Head of caudate nucleus (tissue), 42 donors: ENCODE measurements at regions of chr13 and their contacts with region 1.

Region 1: DNA sequence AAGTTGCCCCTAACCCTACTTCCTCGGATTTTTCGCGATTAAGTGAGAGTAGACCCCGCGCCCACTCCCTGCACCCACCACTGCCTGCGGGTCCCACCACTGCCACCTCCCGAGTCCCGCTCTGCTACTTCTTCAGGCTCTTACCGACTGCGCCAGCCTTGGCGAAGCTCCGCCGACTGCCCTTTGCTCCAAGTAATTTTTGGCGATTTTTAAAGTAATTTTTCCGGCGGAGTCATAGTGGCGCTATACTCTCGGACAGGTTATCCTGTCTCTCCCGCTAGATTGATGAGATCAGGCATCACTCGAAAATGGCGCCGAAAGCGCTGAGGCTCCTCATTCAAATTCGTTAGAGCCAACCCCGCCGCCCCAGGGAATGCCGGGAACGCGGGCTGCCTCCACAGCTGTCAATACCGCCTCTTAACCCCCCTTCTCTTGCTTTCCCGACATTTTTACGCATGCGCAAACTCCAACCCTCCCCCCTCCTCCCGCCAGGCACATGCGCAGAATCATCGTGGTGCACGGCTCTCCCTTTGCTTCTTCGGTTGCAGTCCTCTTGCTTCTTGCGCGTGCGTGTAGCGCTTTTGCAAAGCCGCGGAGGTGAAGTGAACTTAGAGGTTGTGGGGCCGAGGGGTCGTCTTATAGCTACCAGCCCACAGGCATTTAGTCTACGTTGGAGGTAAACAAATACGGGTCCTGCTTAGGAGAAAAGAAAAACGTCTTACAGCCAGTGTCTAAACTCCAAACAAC is 66.6 kb downstream of the KCNRG start:
- DNase-seq: peak; percentile 97 to 100 (median 99)

Region 2: GRCh38 chr13:49357694-49358093 is 724.2 kb before region 1 on chr13:
- intact Hi-C with region 1: no loop called
- DNase-seq: no peak

Region 3: GRCh38 chr13:49597043-49597641 is 484.7 kb before region 1 on chr13:
- intact Hi-C with region 1: no loop called
- DNase-seq: no peak

Region 4: DNA sequence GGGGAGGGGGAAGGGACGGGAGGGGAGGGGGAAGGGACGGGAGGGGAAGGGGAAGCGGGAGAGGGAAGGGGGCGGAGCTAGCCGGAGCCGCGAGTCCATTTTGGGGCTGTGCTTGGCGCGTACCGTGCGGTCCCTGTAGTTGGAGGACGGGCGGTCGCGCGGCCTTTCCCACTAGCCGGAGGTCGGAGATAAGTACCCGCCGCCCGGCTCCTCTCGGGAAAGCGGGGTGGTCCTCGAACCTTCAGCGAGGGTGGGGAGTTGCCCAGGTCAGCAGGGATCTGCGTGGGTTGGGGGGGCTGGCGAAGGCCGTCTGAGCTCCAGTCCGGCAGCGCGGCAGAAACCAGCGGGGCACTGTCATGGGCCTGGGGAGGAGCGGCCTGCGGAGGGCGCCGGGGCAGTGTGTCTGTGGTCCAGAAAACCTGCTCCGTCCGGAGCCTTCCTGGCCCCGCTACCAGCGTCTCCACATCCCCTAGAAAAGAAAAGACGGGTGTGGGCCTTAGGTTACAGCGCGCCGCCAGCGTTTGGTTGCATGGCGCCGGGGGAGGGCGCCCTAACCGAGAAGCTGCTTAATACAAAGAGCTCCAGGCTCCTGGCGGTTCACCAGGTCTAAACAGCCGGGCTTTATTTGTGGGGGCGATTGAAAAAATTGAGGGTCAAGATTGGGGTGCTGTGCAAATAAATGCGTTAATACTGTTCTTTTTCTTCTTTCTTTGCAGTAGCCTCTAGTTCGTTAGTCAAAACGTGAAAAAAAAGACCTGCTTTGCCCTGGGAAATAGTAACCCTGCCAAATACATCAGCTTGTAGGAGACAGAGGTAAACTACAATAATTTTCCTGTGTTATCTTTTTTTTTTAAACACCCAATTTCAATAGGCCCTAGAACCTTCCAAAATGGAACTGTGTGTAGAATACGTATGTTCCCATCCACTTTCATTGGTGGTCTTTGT is 84.6 kb before region 1 on chr13 and contains the start of gene TRIM13:
- intact Hi-C with region 1: loop called (anchors 2 kb)
- DNase-seq: peak; percentile 82 to 96 (median 91)

Region 5: DNA sequence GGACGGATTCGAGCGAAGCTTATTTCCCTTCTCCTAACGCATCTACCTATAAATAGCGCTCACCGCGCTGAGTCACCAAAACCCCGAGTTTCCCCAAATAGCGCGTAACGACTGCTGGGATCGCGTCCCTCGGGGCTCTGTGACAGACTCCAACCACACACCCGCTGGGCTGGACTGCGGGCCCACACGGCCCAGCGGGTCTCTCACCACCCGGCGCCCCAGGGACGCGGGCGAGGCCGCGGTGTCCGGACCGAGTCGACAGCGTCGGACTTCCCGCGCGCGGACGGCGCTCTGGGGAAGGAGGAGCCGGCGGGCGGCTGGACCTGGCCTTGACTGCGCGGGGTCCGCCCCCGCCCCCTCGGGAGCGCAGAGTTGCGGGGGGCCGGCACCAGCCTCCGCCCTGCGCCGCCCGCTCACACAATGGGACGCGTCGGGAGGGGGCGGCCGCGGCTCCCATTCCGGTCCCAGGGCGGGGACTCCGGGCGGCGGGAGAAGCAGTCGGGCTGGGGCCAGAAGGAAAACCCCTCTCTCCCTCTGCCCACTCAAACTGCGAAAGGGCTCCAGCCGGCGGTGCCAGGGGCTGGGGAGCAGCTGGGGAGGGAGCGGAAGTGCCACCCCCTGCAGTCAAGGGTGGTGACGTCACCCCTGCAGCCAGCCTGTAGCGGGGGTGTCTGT is 42.1 kb after region 1 on chr13:
- intact Hi-C with region 1: loop called (anchors 1 kb)
- DNase-seq: peak in 27 of 42 donors; percentile 41 to 96 (median 71)

Region 6: DNA sequence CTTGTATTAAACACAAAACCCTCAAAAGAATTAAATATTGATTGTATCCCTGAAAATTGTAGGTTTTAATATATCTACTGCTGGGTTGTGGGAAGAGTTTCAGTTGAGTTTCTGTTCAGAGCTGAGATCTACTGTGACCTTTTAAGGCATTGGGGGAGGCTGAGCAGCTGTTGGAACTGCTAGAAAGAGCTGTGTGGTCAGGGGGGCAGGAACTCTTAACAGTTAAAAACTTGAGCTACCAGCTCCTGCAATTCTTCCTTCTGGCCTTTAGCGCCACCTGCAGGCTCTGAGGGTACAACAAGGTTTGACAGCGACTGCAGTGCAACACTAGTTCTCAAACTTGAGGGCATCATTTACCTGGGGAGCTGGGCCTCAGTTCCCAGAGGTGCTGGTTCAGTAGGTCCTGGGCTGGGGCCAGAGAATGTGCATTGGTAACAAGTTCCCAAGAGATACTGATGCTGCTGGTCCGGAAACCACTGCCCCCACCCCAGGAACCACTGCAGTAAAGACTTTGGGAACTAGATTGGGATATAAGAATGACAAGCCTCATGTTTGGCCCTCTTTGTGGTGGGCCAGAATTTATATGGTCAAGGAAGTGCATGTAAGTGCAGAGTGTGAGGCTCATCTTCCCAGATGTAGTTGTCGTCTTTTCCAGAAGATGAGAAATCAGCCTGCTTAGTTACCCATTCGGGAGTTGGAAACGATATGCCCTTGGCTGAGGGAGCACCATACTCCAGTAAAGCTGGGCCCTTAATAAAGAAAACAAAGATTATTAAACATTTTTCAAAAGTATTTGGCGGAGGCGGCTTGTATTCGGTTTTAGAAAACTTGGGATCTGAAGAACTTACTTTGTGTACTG is 830.3 kb after region 1 on chr13:
- intact Hi-C with region 1: loop called (anchors 5 kb)
- DNase-seq: peak; percentile 72 to 96 (median 91)

Region 7: GRCh38 chr13:51202477-51203046 is 1120.7 kb after region 1 on chr13:
- intact Hi-C with region 1: no loop called
- DNase-seq: no peak